ENCODE measurements at regions of chr3 and their contacts with region 1.

Region 1: GRCh38 chr3:152199102-152199840 is 69.5 kb upstream of the MBNL1 start:
- DNase-seq: peak; percentile 45
- H3K4me3 ChIP-seq: peak overlapping the region; percentile 49
- H3K27ac ChIP-seq: peak overlapping the region; percentile 63
- H3K4me1 ChIP-seq: peaks cover 85% of the 10 kb centered on the region
- CTCF ChIP-seq: no peak

Region 2: GRCh38 chr3:151740581-151740980 is 458.7 kb before region 1 on chr3:
- CTCF ChIA-PET with region 1: no interaction called
- POLR2A ChIA-PET with region 1: no interaction called
- intact Hi-C with region 1: no loop called
- DNase-seq: no peak
- H3K4me3 ChIP-seq: no peak overlapping the region
- H3K27ac ChIP-seq: no peak overlapping the region
- H3K4me1 ChIP-seq: no peaks in the 10 kb centered on the region
- CTCF ChIP-seq: no peak

Region 3: DNA sequence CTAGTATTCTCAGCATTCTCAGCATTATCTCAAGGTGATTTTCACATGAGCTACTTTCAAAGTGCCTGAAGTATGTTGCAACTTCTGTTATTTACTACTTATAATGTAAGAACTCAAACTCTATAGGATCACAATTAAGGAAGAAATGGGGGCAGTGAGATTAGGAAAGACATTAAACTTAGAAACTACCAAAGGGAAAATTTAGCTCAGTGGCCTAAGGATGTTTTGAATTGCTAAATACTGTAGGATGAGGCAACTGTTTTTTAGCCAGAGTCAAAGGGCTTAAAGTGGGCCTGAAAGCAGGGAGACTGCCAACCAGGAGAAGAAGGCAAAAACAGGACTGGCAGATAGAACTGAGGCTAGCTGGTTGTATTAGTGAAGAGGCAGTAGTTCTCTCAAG is 13.9 kb after region 1 on chr3:
- CTCF ChIA-PET with region 1: interaction called, 4 read pairs
- POLR2A ChIA-PET with region 1: interaction called, 28 read pairs
- intact Hi-C with region 1: no loop called
- DNase-seq: no peak
- H3K4me3 ChIP-seq: no peak overlapping the region
- H3K27ac ChIP-seq: no peak overlapping the region
- H3K4me1 ChIP-seq: no peaks in the 10 kb centered on the region
- CTCF ChIP-seq: no peak

Measured in OCI-LY7 (cell line).